ENCODE measurements at regions of chr18 and their contacts with region 1.

Region 1: GRCh38 chr18:58716060-58716756 is 44.9 kb downstream of the MALT1 start:
- DNase-seq: peak in 1 of 35 experiments; percentile 68
- ATAC-seq: peak; percentile 84 to 92 (median 89)
- H3K4me3 ChIP-seq: no peak overlapping the region
- H3K4me3 Mint-ChIP-seq: peak overlapping the region; percentile 42 to 67 (median 64)
- H3K27ac ChIP-seq: peak overlapping the region; percentile 67
- H3K27ac Mint-ChIP-seq: peak overlapping the region; percentile 92 to 94
- H3K4me1 ChIP-seq: peaks cover 9 to 36% of the 10 kb centered on the region in 2 experiments
- H3K4me1 Mint-ChIP-seq: peaks cover 62 to 73% (median 63%) of the 10 kb centered on the region in 3 donors
- H3K27me3 ChIP-seq: no peaks in the 10 kb centered on the region
- H3K27me3 Mint-ChIP-seq: no peaks in the 10 kb centered on the region

Region 2: GRCh38 chr18:57404345-57404744 is 1311.9 kb before region 1 on chr18:
- CTCF ChIA-PET with region 1: no interaction called
- POLR2A ChIA-PET with region 1: no interaction called
- DNase-seq: no peak
- ATAC-seq: no peak
- H3K4me3 ChIP-seq: no peak overlapping the region
- H3K4me3 Mint-ChIP-seq: no peak overlapping the region
- H3K27ac ChIP-seq: no peak overlapping the region
- H3K27ac Mint-ChIP-seq: no peak overlapping the region
- H3K4me1 ChIP-seq: no peaks in the 10 kb centered on the region
- H3K4me1 Mint-ChIP-seq: no peaks in the 10 kb centered on the region
- H3K27me3 ChIP-seq: peaks cover 2 to 5% of the 10 kb centered on the region in 2 experiments
- H3K27me3 Mint-ChIP-seq: peaks cover 17 to 31% of the 10 kb centered on the region in 2 donors

Region 3: GRCh38 chr18:58687871-58688308 is 28.3 kb before region 1 on chr18:
- CTCF ChIA-PET with region 1: interaction called, 3 read pairs
- POLR2A ChIA-PET with region 1: interaction called, 4 to 13 read pairs
- DNase-seq: peak; percentile 28 to 91 (median 73)
- ATAC-seq: peak; percentile 89 to 96 (median 91)
- H3K4me3 ChIP-seq: peak overlapping the region in 1 of 2 donors; percentile 14
- H3K4me3 Mint-ChIP-seq: peak overlapping the region; percentile 43 to 79 (median 77)
- H3K27ac ChIP-seq: peak overlapping the region; percentile 84
- H3K27ac Mint-ChIP-seq: peak overlapping the region; percentile 99
- H3K4me1 ChIP-seq: peaks cover 53 to 54% of the 10 kb centered on the region in 2 experiments
- H3K4me1 Mint-ChIP-seq: peaks cover 71 to 86% (median 81%) of the 10 kb centered on the region in 3 donors
- H3K27me3 ChIP-seq: no peaks in the 10 kb centered on the region
- H3K27me3 Mint-ChIP-seq: no peaks in the 10 kb centered on the region

Region 4: GRCh38 chr18:58738322-58738721 is 22.1 kb after region 1 on chr18:
- CTCF ChIA-PET with region 1: no interaction called
- POLR2A ChIA-PET with region 1: no interaction called
- DNase-seq: no peak
- ATAC-seq: no peak
- H3K4me3 ChIP-seq: no peak overlapping the region
- H3K4me3 Mint-ChIP-seq: no peak overlapping the region
- H3K27ac ChIP-seq: no peak overlapping the region
- H3K27ac Mint-ChIP-seq: no peak overlapping the region
- H3K4me1 ChIP-seq: no peaks in the 10 kb centered on the region
- H3K4me1 Mint-ChIP-seq: peaks cover 4 to 9% (median 5%) of the 10 kb centered on the region in 3 donors
- H3K27me3 ChIP-seq: no peaks in the 10 kb centered on the region
- H3K27me3 Mint-ChIP-seq: no peaks in the 10 kb centered on the region

Measured in T-cell (primary cell).